Sigmoid colon (tissue), 7 donors: ENCODE measurements at regions of chr9 and their contacts with region 1.

Region 1: DNA sequence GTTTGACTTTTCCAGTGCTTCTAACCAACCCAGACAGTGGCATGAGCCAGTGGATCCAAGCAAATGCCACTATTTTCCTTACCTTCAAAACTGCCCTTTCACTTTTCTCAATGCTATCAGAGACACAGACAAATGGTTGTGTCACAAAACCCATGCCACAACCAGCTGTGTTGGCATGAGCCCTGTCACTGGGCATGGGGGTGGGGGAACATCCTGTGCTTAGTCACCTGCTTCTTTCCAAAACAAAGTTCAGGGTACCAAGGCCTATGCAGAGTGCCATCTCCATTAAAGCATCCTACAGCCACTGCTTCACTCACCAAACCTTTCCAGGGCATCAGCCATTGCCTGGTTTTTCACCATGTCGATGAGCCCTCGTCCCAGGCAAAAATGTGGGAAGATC is 30.1 kb downstream of the NIPSNAP3B start:
- DNase-seq: no peak
- H3K4me3 ChIP-seq: no peak overlapping the region
- H3K27ac ChIP-seq: no peak overlapping the region
- H3K4me1 ChIP-seq: peaks cover 0 to 12% (median 0%) of the 10 kb centered on the region in 4 donors
- H3K27me3 ChIP-seq: no peaks in the 10 kb centered on the region
- CTCF ChIP-seq: no peak
- EP300 ChIP-seq: no peak
- POLR2A ChIP-seq: no peak

Region 2: GRCh38 chr9:104361207-104361606 is 432.9 kb before region 1 on chr9:
- intact Hi-C with region 1: no loop called
- DNase-seq: no peak
- H3K4me3 ChIP-seq: no peak overlapping the region
- H3K27ac ChIP-seq: no peak overlapping the region
- H3K4me1 ChIP-seq: no peaks in the 10 kb centered on the region
- H3K27me3 ChIP-seq: no peaks in the 10 kb centered on the region
- CTCF ChIP-seq: no peak
- EP300 ChIP-seq: no peak
- POLR2A ChIP-seq: no peak

Region 3: GRCh38 chr9:104826907-104827306 is 32.8 kb after region 1 on chr9:
- intact Hi-C with region 1: loop called (anchors 5 kb)
- DNase-seq: no peak
- H3K4me3 ChIP-seq: no peak overlapping the region
- H3K27ac ChIP-seq: no peak overlapping the region
- H3K4me1 ChIP-seq: peaks cover 0 to 8% (median 0%) of the 10 kb centered on the region in 4 donors
- H3K27me3 ChIP-seq: no peaks in the 10 kb centered on the region
- CTCF ChIP-seq: no peak
- EP300 ChIP-seq: no peak
- POLR2A ChIP-seq: no peak